ENCODE measurements at regions of chr10 and their contacts with region 1.

Region 1: GRCh38 chr10:7417103-7417623 is 6.3 kb upstream of the SFMBT2 start:
- DNase-seq: no peak
- H3K4me3 ChIP-seq: no peak overlapping the region
- H3K27ac ChIP-seq: no peak overlapping the region
- H3K4me1 ChIP-seq: peaks cover 11% of the 10 kb centered on the region
- H3K27me3 ChIP-seq: peaks cover 29% of the 10 kb centered on the region
- CTCF ChIP-seq: peak; percentile 74

Region 2: GRCh38 chr10:7121154-7121810 is 295.9 kb before region 1 on chr10:
- intact Hi-C with region 1: loop called (anchors 5 kb)
- DNase-seq: peak; percentile 46
- H3K4me3 ChIP-seq: no peak overlapping the region
- H3K27ac ChIP-seq: no peak overlapping the region
- H3K4me1 ChIP-seq: no peaks in the 10 kb centered on the region
- H3K27me3 ChIP-seq: peaks cover 20% of the 10 kb centered on the region
- CTCF ChIP-seq: peak; percentile 82